PC-3 (cell line): ENCODE measurements at regions of chr4 and their contacts with region 1.

Region 1: GRCh38 chr4:156475322-156475721 is 496.3 kb downstream of the PDGFC start:
- DNase-seq: peak; percentile 69
- ATAC-seq: peak; percentile 60
- H3K4me3 ChIP-seq: no peak overlapping the region
- H3K27ac ChIP-seq: peak overlapping the region; percentile 69
- H3K4me1 ChIP-seq: peaks cover 18% of the 10 kb centered on the region
- H3K27me3 ChIP-seq: no peaks in the 10 kb centered on the region
- CTCF ChIP-seq: peak; percentile 77

Region 2: DNA sequence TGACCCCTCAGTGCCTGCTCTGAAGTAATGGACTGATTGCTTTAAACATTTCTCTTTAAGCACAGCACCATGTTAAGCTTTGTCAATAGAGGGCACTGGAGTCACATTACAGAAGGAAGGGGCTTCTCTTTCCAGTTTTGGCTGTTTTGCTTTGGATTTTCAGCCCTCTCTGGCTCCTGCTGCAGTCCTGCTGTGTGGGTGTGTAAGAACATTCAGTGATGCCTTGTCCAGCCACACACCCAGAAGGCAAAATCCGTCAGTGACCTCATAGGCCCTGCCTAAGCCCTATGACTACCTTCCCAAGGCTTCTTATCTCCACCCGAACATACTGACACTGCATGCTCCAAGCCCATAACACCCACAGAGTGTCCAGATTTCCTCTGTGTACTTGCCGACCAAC is 306.3 kb before region 1 on chr4:
- CTCF ChIA-PET with region 1: interaction called, 4 read pairs
- POLR2A ChIA-PET with region 1: no interaction called
- intact Hi-C with region 1: loop called (anchors 5 kb)
- DNase-seq: peak; percentile 75
- ATAC-seq: peak; percentile 91
- H3K4me3 ChIP-seq: no peak overlapping the region
- H3K27ac ChIP-seq: peak overlapping the region; percentile 30; the same call in 1 of the 2 replicates
- H3K4me1 ChIP-seq: peaks cover 8% of the 10 kb centered on the region; the same call in 1 of the 2 replicates
- H3K27me3 ChIP-seq: no peaks in the 10 kb centered on the region
- CTCF ChIP-seq: peak; percentile 71

Region 3: DNA sequence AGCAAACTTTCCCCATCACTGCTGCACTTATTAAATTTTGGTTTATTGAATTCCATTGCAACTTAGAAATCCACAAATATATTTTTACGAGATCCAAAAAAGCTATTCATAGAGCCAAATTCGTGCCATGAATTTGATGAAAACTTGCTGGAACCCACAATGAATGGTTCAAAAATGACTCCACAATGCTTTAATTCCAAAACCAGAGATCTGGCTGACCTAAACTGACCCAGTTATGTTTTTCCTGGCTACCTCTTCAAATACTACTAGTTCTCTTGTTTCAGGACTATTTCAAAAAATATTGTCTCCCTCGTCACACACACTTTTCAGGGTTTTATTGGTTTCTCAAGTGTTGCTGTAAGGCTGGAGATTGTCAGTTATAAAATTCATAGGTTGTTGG is 21.5 kb after region 1 on chr4:
- CTCF ChIA-PET with region 1: no interaction called
- POLR2A ChIA-PET with region 1: no interaction called
- intact Hi-C with region 1: loop called (anchors 2 kb)
- DNase-seq: peak; percentile 6
- ATAC-seq: no peak; the same call in 1 of the 2 replicates
- H3K4me3 ChIP-seq: no peak overlapping the region
- H3K27ac ChIP-seq: peak overlapping the region; percentile 40
- H3K4me1 ChIP-seq: 0 out of 2 replicates have a peak, but pooled peaks cover 7% of the 10 kb centered on the region
- H3K27me3 ChIP-seq: no peaks in the 10 kb centered on the region
- CTCF ChIP-seq: no peak

Region 4: DNA sequence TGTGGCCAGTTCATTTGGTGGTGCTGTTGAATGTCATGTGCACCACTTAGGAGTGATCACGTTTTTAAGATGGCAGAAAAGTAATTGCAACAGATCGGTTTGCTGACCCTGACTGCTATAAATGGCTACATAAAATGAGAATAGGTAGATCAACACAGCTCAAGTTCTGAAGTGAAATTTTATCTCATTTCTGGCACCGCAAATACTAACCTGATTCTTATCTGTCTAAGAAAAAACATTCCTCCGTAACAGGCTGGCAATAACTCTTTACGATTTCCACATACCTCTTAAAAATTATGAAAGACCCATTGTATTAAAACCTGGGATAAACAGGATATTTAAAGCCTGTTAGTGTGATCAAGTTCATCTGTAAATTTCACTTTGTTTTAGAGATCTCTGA is 108.8 kb after region 1 on chr4:
- CTCF ChIA-PET with region 1: no interaction called
- POLR2A ChIA-PET with region 1: no interaction called
- intact Hi-C with region 1: loop called (anchors 5 kb)
- DNase-seq: peak; percentile 76
- ATAC-seq: peak; percentile 82
- H3K4me3 ChIP-seq: peak overlapping the region; percentile 21; the same call in 1 of the 2 replicates
- H3K27ac ChIP-seq: peak overlapping the region; percentile 63
- H3K4me1 ChIP-seq: peaks cover 31% of the 10 kb centered on the region
- H3K27me3 ChIP-seq: no peaks in the 10 kb centered on the region
- CTCF ChIP-seq: no peak

Region 5: GRCh38 chr4:156771171-156771837 is 296.0 kb after region 1 on chr4:
- CTCF ChIA-PET with region 1: no interaction called
- POLR2A ChIA-PET with region 1: no interaction called
- intact Hi-C with region 1: loop called (anchors 5 kb)
- DNase-seq: peak; percentile 85
- ATAC-seq: peak; percentile 83
- H3K4me3 ChIP-seq: peak overlapping the region; percentile 50
- H3K27ac ChIP-seq: peak overlapping the region; percentile 57
- H3K4me1 ChIP-seq: peaks cover 53% of the 10 kb centered on the region
- H3K27me3 ChIP-seq: no peaks in the 10 kb centered on the region
- CTCF ChIP-seq: no peak

Region 6: GRCh38 chr4:157035471-157035870 is 560.1 kb after region 1 on chr4:
- CTCF ChIA-PET with region 1: no interaction called
- POLR2A ChIA-PET with region 1: no interaction called
- intact Hi-C with region 1: no loop called
- DNase-seq: no peak
- ATAC-seq: no peak
- H3K4me3 ChIP-seq: no peak overlapping the region
- H3K27ac ChIP-seq: no peak overlapping the region
- H3K4me1 ChIP-seq: no peaks in the 10 kb centered on the region
- H3K27me3 ChIP-seq: no peaks in the 10 kb centered on the region
- CTCF ChIP-seq: no peak

Region 7: GRCh38 chr4:157045507-157046127 is 570.3 kb after region 1 on chr4:
- CTCF ChIA-PET with region 1: interaction called, 12 read pairs
- POLR2A ChIA-PET with region 1: no interaction called
- intact Hi-C with region 1: no loop called
- DNase-seq: peak; percentile 67
- ATAC-seq: peak; percentile 85
- H3K4me3 ChIP-seq: no peak overlapping the region
- H3K27ac ChIP-seq: no peak overlapping the region
- H3K4me1 ChIP-seq: no peaks in the 10 kb centered on the region
- H3K27me3 ChIP-seq: no peaks in the 10 kb centered on the region
- CTCF ChIP-seq: peak; percentile 82